CD8-positive, alpha-beta memory T cell (primary cell): ENCODE measurements at regions of chr2 and their contacts with region 1.

Region 1: GRCh38 chr2:70086838-70087701 is at the start of gene PCBP1:
- DNase-seq: peak; percentile 92 to 98 (median 98)
- H3K4me3 ChIP-seq: peak within 1 kb of the TSS; percentile 95
- H3K4me3 Mint-ChIP-seq: peak within 1 kb of the TSS; percentile 94 to 99 (median 96)
- H3K27ac ChIP-seq: peak within 1 kb of the TSS; percentile 99
- H3K27ac Mint-ChIP-seq: peak within 1 kb of the TSS; percentile 100
- H3K4me1 ChIP-seq: peaks cover 65% of the 10 kb centered on the region
- H3K4me1 Mint-ChIP-seq: peaks cover 65 to 79% (median 77%) of the 10 kb centered on the region in 3 donors
- H3K27me3 ChIP-seq: no peaks in the 10 kb centered on the region
- H3K27me3 Mint-ChIP-seq: peaks cover 0 to 5% of the 10 kb centered on the region in 2 donors
- total RNA-seq, gene PCBP1: 428 to 434 TPM

Region 2: DNA sequence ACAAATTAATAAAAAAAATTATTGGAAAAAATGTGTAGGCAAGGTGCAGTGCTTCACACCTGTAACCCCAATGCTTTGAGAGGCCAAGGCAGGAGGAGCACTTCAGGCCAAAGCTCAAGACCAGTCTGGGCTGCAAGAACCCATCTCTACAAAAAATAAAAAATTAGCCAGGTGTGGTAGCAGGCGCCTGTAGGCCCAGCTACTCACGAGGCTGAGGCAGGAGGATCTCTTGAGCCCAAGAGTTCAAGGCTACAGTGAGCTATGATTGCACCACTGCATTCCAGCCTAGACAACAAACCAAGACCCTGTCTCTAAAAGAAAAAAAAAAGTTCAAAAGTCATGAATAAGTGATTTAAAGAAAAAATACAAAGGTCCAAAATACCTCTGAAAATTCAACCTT is 36.4 kb before region 1 on chr2:
- CTCF ChIA-PET with region 1: no interaction called
- POLR2A ChIA-PET with region 1: no interaction called
- DNase-seq: no peak
- H3K4me3 ChIP-seq: no peak overlapping the region
- H3K4me3 Mint-ChIP-seq: no peak overlapping the region
- H3K27ac ChIP-seq: no peak overlapping the region
- H3K27ac Mint-ChIP-seq: peak overlapping the region in 1 of 8 donors; percentile 81
- H3K4me1 ChIP-seq: no peaks in the 10 kb centered on the region
- H3K4me1 Mint-ChIP-seq: peaks cover 0 to 13% (median 7%) of the 10 kb centered on the region in 3 donors
- H3K27me3 ChIP-seq: no peaks in the 10 kb centered on the region
- H3K27me3 Mint-ChIP-seq: no peaks in the 10 kb centered on the region

Region 3: DNA sequence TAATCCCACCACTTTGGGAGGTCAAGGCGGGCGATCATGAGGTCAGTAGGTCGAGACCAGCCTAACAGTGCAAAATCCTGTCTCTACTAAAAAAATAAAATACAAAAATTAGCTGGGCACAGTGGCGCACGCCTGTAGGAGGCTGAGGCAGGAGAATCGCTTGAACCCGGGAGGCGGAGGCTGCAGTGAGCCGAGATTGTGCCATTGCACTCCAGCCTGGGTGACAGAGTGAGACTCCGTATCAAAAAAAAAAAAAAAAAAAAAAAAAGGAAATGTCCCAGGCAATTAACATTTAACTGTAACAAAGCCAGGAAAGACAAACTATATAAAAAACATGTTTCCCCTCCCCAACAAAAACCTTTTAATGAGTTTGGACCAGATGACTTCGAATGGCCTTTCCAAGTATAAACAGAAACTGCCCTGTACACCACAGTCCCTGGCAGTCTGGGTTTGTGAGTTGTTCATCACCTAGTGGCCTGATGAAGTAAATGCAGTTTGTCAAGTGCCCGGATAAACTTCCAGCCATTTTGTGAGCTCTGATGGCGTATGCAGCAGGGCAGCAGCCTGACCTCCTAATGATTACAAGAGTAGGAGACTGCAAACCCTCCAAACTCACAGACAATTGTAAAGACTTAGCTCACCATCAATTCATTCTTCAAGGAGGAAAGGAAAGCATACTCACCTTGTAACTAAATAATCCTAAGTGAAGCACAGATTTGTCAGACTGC is 16.4 kb before region 1 on chr2:
- CTCF ChIA-PET with region 1: interaction called, 105 read pairs
- POLR2A ChIA-PET with region 1: interaction called, 45 read pairs
- DNase-seq: peak; percentile 30 to 79 (median 74)
- H3K4me3 ChIP-seq: peak overlapping the region; percentile 33
- H3K4me3 Mint-ChIP-seq: peak overlapping the region; percentile 54 to 86 (median 78)
- H3K27ac ChIP-seq: peak overlapping the region; percentile 12
- H3K27ac Mint-ChIP-seq: peak overlapping the region; percentile 87 to 99 (median 98)
- H3K4me1 ChIP-seq: peaks cover 48% of the 10 kb centered on the region
- H3K4me1 Mint-ChIP-seq: peaks cover 41 to 52% (median 47%) of the 10 kb centered on the region in 3 donors
- H3K27me3 ChIP-seq: no peaks in the 10 kb centered on the region
- H3K27me3 Mint-ChIP-seq: no peaks in the 10 kb centered on the region

Region 4: GRCh38 chr2:70104231-70105111 is 17.4 kb after region 1 on chr2:
- CTCF ChIA-PET with region 1: interaction called, 105 read pairs
- POLR2A ChIA-PET with region 1: interaction called, 54 read pairs
- DNase-seq: peak in 1 of 5 donors; percentile 50
- H3K4me3 ChIP-seq: peak overlapping the region; percentile 42
- H3K4me3 Mint-ChIP-seq: peak overlapping the region; percentile 79 to 89 (median 80)
- H3K27ac ChIP-seq: peak overlapping the region; percentile 52
- H3K27ac Mint-ChIP-seq: peak overlapping the region; percentile 94 to 97 (median 96)
- H3K4me1 ChIP-seq: peaks cover 42% of the 10 kb centered on the region
- H3K4me1 Mint-ChIP-seq: peaks cover 41 to 58% (median 55%) of the 10 kb centered on the region in 3 donors
- H3K27me3 ChIP-seq: no peaks in the 10 kb centered on the region
- H3K27me3 Mint-ChIP-seq: no peaks in the 10 kb centered on the region

Region 5: GRCh38 chr2:70124983-70125480 is 38.0 kb after region 1 on chr2:
- CTCF ChIA-PET with region 1: interaction called, 18 read pairs
- POLR2A ChIA-PET with region 1: interaction called, 168 read pairs
- DNase-seq: peak in 4 of 5 donors; percentile 45 to 79 (median 62)
- H3K4me3 ChIP-seq: peak overlapping the region; percentile 84
- H3K4me3 Mint-ChIP-seq: peak overlapping the region; percentile 86 to 98 (median 95)
- H3K27ac ChIP-seq: peak overlapping the region; percentile 90
- H3K27ac Mint-ChIP-seq: peak overlapping the region; percentile 98 to 100 (median 100)
- H3K4me1 ChIP-seq: peaks cover 63% of the 10 kb centered on the region
- H3K4me1 Mint-ChIP-seq: peaks cover 61 to 82% (median 81%) of the 10 kb centered on the region in 3 donors
- H3K27me3 ChIP-seq: no peaks in the 10 kb centered on the region
- H3K27me3 Mint-ChIP-seq: peaks cover 0 to 6% of the 10 kb centered on the region in 2 donors

Region 6: GRCh38 chr2:70132244-70133126 is 45.4 kb after region 1 on chr2:
- CTCF ChIA-PET with region 1: interaction called, 54 read pairs
- POLR2A ChIA-PET with region 1: interaction called, 168 read pairs
- DNase-seq: peak in 4 of 5 donors; percentile 19 to 72 (median 56)
- H3K4me3 ChIP-seq: peak overlapping the region; percentile 57
- H3K4me3 Mint-ChIP-seq: peak overlapping the region; percentile 75 to 91 (median 84)
- H3K27ac ChIP-seq: peak overlapping the region; percentile 79
- H3K27ac Mint-ChIP-seq: peak overlapping the region; percentile 94 to 99 (median 96)
- H3K4me1 ChIP-seq: peaks cover 86% of the 10 kb centered on the region
- H3K4me1 Mint-ChIP-seq: peaks cover 66 to 86% (median 85%) of the 10 kb centered on the region in 3 donors
- H3K27me3 ChIP-seq: no peaks in the 10 kb centered on the region
- H3K27me3 Mint-ChIP-seq: no peaks in the 10 kb centered on the region

Region 7: GRCh38 chr2:70190418-70191243 is 103.6 kb after region 1 on chr2 and contains the start of gene C2orf42:
- CTCF ChIA-PET with region 1: interaction called, 5 read pairs
- POLR2A ChIA-PET with region 1: interaction called, 13 read pairs
- DNase-seq: peak; percentile 86 to 97 (median 96)
- H3K4me3 ChIP-seq: peak within 1 kb of the TSS; percentile 82
- H3K4me3 Mint-ChIP-seq: peak within 1 kb of the TSS; percentile 90 to 98 (median 95)
- H3K27ac ChIP-seq: peak within 1 kb of the TSS; percentile 93
- H3K27ac Mint-ChIP-seq: peak within 1 kb of the TSS; percentile 96 to 100 (median 99)
- H3K4me1 ChIP-seq: peaks cover 5% of the 10 kb centered on the region
- H3K4me1 Mint-ChIP-seq: peaks cover 17 to 22% (median 22%) of the 10 kb centered on the region in 3 donors
- H3K27me3 ChIP-seq: no peaks in the 10 kb centered on the region
- H3K27me3 Mint-ChIP-seq: peaks cover 0 to under 1% of the 10 kb centered on the region in 2 donors
- total RNA-seq, gene C2orf42: 29.1 to 34.6 TPM